Activated CD4-positive, alpha-beta T cell treated with anti-CD3 and anti-CD28 coated beads, Interleukin-2, amount 10 ng/mL, durations not matched to agents 7 days and 5 days (primary cell): ENCODE measurements at regions of chr16 and their contacts with region 1.

Region 1: GRCh38 chr16:50806099-50807062 is 64.5 kb downstream of the CYLD start:
- DNase-seq: peak; percentile 90
- H3K4me3 Mint-ChIP-seq: peak overlapping the region; percentile 59
- H3K27ac Mint-ChIP-seq: peak overlapping the region; percentile 71
- H3K4me1 Mint-ChIP-seq: peaks cover 17% of the 10 kb centered on the region
- H3K27me3 Mint-ChIP-seq: no peaks in the 10 kb centered on the region

Region 2: GRCh38 chr16:50781043-50781442 is 25.3 kb before region 1 on chr16:
- CTCF ChIA-PET with region 1: interaction called, 11 read pairs
- POLR2A ChIA-PET with region 1: no interaction called
- DNase-seq: no peak
- H3K4me3 Mint-ChIP-seq: no peak overlapping the region
- H3K27ac Mint-ChIP-seq: peak overlapping the region; percentile 77
- H3K4me1 Mint-ChIP-seq: peaks cover 44% of the 10 kb centered on the region
- H3K27me3 Mint-ChIP-seq: no peaks in the 10 kb centered on the region

Region 3: DNA sequence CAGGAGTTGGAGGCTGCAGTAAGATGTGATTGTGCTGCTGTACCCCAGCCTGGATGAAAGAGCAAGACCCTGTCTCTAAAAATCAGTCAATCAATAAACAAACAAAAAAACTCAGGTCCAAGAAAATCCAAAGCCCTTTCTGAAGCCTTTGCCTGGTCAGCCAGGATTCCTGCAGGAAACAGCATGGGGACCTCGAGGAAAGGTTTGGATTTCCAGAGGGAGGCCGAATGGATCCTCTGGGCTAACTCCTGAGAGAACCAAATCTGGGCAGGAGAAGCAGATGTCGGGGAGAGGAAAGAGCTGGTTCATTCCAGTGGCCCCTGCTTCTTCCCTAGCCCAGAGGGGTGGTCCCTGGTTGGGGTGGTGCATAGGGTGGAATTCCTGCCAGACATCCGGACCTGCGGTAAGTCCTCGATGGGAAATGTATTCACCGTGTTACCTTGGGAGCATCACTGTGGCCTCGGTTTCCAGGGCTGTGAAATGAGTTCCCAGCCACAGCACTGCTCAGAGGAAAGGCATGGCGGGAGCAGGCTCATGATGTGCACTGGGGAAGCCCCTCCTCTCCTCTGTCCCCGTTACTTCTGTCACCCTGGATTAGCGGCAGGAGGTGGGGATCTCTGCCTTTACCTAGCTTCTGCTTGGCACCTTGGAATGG is 10.6 kb after region 1 on chr16:
- CTCF ChIA-PET with region 1: interaction called, 11 read pairs
- POLR2A ChIA-PET with region 1: no interaction called
- DNase-seq: no peak
- H3K4me3 Mint-ChIP-seq: no peak overlapping the region
- H3K27ac Mint-ChIP-seq: no peak overlapping the region
- H3K4me1 Mint-ChIP-seq: no peaks in the 10 kb centered on the region
- H3K27me3 Mint-ChIP-seq: no peaks in the 10 kb centered on the region

Region 4: DNA sequence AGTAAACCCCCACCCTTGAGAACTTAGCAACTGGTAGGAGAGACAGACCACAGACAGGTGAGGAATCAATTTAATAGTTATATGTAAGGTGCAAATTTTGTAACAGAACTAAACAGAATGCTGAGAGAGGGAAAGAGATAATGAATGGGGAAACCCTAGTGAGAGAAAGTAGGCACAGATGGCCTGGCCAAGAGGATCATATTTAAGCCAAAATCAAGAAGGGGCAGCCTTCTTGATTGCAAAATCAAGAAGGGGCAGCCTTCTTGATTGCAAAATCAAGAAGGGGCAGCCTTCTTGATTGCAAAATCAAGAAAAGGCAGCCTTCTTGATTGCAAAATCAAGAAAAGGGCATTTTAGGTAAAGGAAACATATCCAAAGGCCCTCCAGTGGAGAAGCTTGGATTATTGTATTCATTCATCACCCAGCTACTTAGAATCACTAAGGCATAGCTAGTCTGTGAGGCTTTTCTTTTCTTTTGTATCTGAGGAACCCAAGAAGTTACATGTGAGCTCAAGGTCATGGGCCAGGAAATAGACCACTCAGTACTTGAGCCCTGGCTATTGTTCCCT is 126.1 kb after region 1 on chr16:
- CTCF ChIA-PET with region 1: no interaction called
- POLR2A ChIA-PET with region 1: no interaction called
- DNase-seq: no peak
- H3K4me3 Mint-ChIP-seq: no peak overlapping the region
- H3K27ac Mint-ChIP-seq: no peak overlapping the region
- H3K4me1 Mint-ChIP-seq: no peaks in the 10 kb centered on the region
- H3K27me3 Mint-ChIP-seq: peaks cover 2% of the 10 kb centered on the region